Heart left ventricle (tissue), 16 donors: ENCODE measurements at regions of chr1 and their contacts with region 1.

Region 1: DNA sequence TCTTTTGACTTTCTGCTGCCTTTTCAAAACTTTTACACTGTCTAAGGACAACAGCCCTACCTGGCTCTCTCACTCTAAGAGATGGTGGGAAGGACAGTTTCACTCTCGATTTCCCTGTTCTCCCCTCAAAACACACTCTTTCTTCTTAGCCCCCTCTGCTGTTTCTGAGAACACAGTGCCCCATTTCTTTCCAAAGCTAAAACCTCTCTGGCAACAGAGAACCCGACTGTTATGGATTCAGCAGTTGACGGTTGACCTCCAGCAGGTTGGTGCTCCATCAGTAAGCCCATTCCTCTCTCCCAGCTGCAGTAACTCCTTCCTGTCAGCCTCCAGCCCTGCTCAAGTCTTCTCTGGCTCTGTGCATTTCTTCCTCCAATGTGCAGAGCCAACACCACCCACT is 88.2 kb upstream of the ABCD3 start:
- DNase-seq: peak in 1 of 5 donors; percentile 22
- ATAC-seq: peak in 3 of 4 donors; percentile 6 to 46 (median 40)
- H3K4me3 ChIP-seq: peak overlapping the region in 5 of 12 donors; percentile 5 to 28 (median 13)
- H3K27ac ChIP-seq: peak overlapping the region in 10 of 12 donors; percentile 38 to 79 (median 76)
- H3K4me1 ChIP-seq: peaks cover 6 to 72% (median 52%) of the 10 kb centered on the region in 12 donors
- H3K27me3 ChIP-seq: peaks cover 0 to 18% (median 0%) of the 10 kb centered on the region in 9 donors
- CTCF ChIP-seq: peak in 11 of 12 donors; percentile 23 to 70 (median 54)
- POLR2A ChIP-seq: no peak

Region 2: DNA sequence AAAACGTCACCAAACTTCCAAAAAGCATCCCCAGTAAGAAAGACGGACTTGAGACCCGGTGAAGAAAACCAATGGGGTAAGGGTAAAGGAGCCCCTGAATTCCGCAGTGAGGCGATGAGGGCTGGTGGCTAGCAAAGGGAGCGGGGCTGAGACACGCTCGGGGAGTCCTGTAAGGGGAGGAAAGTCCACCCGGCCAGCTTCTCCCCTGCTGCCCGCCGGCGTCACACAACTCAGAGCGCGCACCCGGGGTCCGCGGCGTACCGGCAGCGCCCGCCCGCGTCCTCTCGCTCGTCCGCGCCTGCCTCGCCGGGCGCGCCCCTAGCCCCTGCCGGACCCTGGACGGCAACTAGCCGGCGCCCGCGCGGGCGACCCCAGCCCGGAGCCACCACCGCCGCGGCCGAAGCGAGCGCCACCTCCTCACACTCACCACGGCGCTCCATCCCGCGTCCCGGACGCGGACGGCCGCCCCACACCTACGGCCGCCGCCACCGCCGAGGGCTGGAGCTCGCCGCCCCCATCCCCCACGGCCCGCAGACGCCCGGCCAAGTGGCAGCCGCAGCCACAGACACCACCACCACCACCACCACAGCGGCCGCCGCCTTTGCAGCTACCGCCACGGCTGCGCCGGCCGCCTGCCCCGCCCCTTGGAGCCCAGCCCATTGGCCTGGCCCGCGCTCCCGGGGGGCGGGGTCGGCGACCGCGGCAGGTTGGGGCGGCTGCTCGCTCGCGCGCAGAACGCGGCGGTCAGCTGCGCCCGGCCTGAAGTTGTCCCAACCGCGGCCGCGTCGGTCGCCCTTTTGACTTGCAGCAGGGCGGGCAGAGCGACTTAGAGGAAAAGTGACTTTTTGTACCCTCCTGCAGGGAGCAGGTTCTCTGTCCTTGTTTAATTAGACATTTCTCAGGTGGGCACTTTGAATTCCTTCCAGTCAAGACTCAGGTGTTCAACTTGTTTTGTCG is 82.6 kb before region 1 on chr1:
- intact Hi-C with region 1: loop called in 7 of 10 experiments (anchors 2 to 5 kb)
- DNase-seq: peak; percentile 84 to 91 (median 88)
- ATAC-seq: peak; percentile 83 to 98 (median 94)
- H3K4me3 ChIP-seq: peak overlapping the region; percentile 54 to 98 (median 72)
- H3K27ac ChIP-seq: peak overlapping the region; percentile 78 to 95 (median 88)
- H3K4me1 ChIP-seq: peaks cover 0 to 15% (median 0%) of the 10 kb centered on the region in 12 donors
- H3K27me3 ChIP-seq: peaks cover 0 to 16% (median 0%) of the 10 kb centered on the region in 9 donors
- CTCF ChIP-seq: peak in 2 of 12 donors; percentile 9 to 26
- POLR2A ChIP-seq: peak in 1 of 2 donors; percentile 95

Region 3: DNA sequence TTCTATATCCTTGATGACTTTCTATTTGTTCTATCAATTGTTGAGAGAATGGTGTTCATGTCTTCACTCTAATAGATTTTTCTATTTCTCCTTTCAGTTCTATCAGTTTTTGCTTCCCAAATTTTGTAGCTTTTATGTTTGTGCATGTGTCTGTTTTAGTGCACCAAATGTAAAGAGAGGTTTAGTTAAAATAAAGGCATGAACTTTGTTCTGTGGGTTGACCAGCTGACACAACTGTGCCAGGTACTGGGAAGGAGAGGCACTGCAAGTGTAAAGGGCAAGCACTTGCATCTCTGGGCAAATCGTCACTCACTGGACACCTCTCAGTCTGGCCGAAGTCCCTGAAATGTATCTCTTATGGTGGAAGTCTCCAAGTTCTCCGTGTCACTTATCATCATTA is 49.6 kb after region 1 on chr1:
- intact Hi-C with region 1: no loop called
- DNase-seq: peak in 3 of 5 donors; percentile 43 to 64 (median 57)
- ATAC-seq: peak; percentile 58 to 92 (median 78)
- H3K4me3 ChIP-seq: no peak overlapping the region
- H3K27ac ChIP-seq: no peak overlapping the region
- H3K4me1 ChIP-seq: peaks cover 0 to 10% (median 0%) of the 10 kb centered on the region in 12 donors
- H3K27me3 ChIP-seq: no peaks in the 10 kb centered on the region
- CTCF ChIP-seq: no peak
- POLR2A ChIP-seq: no peak